Activated CD4-positive, alpha-beta T cell treated with anti-CD3 and anti-CD28 coated beads for 36 hours (primary cell): ENCODE measurements at regions of chr16 and their contacts with region 1.

Region 1: DNA sequence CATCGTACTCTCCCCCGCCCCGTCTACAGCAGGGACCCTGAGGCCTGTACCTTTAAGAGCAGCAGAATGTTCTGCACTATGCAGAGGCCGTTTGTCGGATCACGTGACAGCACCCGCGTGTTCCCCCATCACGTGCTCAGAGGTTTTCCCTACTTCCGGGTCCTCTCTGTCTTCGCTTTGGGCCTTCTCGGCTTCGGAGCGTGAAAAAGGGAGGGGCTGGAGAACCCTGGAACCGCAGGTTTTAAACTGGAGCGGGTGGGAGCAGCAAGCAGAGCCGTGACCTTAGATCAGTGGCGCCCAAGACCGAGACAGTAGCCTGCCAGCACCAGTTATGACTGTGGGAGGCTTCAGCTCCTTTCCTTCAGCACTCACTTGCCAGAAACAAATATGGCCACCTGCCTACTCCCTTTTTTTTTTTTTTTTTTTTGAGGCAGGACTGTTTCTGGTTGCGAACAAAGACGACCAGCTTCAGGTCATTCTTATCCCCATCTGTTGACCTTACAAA is at the start of gene CLN3:
- DNase-seq: peak; percentile 94
- ATAC-seq: peak; percentile 64
- H3K4me3 Mint-ChIP-seq: peak within 1 kb of the TSS; percentile 94
- H3K27ac Mint-ChIP-seq: peak within 1 kb of the TSS; percentile 100
- H3K4me1 Mint-ChIP-seq: peaks cover 60% of the 10 kb centered on the region
- H3K27me3 Mint-ChIP-seq: no peaks in the 10 kb centered on the region
- total RNA-seq, gene CLN3: 19.0 to 24.6 TPM

Region 2: DNA sequence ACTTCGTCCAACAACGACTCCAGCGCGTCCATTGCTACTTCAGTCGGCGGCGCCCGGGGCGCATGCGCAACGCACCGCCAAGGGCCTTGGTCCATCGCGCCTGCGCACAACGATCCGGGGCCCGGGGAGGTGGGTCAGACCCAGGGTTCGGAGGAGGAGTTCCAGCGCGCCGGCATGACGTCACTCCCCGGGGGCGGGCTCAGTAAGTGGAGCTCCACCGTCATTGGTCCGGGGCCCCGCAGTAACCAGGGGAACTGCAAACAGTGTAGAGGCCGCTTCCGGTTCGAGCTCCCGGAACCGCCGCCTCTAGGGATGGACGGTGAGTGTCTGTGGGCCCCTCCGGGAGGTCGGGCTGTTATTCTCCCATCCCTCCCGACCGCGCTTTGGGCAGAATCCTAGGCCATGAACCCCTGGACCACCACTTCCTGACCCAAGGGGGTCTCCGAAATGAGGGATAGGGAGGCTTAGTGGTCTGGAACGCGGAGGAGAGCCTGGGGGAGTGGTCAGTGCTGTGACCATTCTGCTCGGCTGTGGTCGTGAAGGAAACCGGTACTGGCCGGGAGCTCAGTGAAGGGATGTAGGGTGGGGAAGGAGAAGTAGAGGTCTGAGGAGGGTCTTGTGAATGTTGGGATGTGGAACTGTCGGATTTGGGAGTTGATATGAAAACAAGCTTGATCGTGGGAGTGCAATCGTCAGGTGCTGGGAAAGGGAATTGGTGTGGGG is 942.0 kb before region 1 on chr16 and contains the starts of genes GTF3C1 and KATNIP:
- CTCF ChIA-PET with region 1: no interaction called
- POLR2A ChIA-PET with region 1: no interaction called
- intact Hi-C with region 1: loop called in 1 of 2 experiments (anchors 5 kb)
- DNase-seq: peak; percentile 100
- ATAC-seq: peak; percentile 98
- H3K4me3 Mint-ChIP-seq: peak within 1 kb of the TSS; percentile 94
- H3K27ac Mint-ChIP-seq: peak within 1 kb of the TSS; percentile 81
- H3K4me1 Mint-ChIP-seq: peaks cover 35% of the 10 kb centered on the region
- H3K27me3 Mint-ChIP-seq: no peaks in the 10 kb centered on the region
- total RNA-seq, gene GTF3C1: 48.8 to 50.7 TPM
- total RNA-seq, gene KATNIP: 12.3 to 12.8 TPM

Region 3: GRCh38 chr16:28193530-28194423 is 298.2 kb before region 1 on chr16:
- CTCF ChIA-PET with region 1: no interaction called
- POLR2A ChIA-PET with region 1: no interaction called
- intact Hi-C with region 1: loop called in 1 of 2 experiments (anchors 5 kb)
- DNase-seq: peak; percentile 78
- ATAC-seq: peak; percentile 67
- H3K4me3 Mint-ChIP-seq: peak overlapping the region; percentile 66
- H3K27ac Mint-ChIP-seq: peak overlapping the region; percentile 92
- H3K4me1 Mint-ChIP-seq: peaks cover 81% of the 10 kb centered on the region
- H3K27me3 Mint-ChIP-seq: no peaks in the 10 kb centered on the region

Region 4: GRCh38 chr16:28291873-28292660 is 200.0 kb before region 1 on chr16 and contains the start of gene SBK1:
- CTCF ChIA-PET with region 1: interaction called, 3 read pairs
- POLR2A ChIA-PET with region 1: interaction called, 3 read pairs
- intact Hi-C with region 1: loop called in 1 of 2 experiments (anchors 1 kb)
- DNase-seq: peak; percentile 91
- ATAC-seq: peak; percentile 94
- H3K4me3 Mint-ChIP-seq: peak within 1 kb of the TSS; percentile 84
- H3K27ac Mint-ChIP-seq: peak within 1 kb of the TSS; percentile 93
- H3K4me1 Mint-ChIP-seq: peaks cover 51% of the 10 kb centered on the region
- H3K27me3 Mint-ChIP-seq: no peaks in the 10 kb centered on the region
- total RNA-seq, gene SBK1: 6.5 to 6.6 TPM

Region 5: DNA sequence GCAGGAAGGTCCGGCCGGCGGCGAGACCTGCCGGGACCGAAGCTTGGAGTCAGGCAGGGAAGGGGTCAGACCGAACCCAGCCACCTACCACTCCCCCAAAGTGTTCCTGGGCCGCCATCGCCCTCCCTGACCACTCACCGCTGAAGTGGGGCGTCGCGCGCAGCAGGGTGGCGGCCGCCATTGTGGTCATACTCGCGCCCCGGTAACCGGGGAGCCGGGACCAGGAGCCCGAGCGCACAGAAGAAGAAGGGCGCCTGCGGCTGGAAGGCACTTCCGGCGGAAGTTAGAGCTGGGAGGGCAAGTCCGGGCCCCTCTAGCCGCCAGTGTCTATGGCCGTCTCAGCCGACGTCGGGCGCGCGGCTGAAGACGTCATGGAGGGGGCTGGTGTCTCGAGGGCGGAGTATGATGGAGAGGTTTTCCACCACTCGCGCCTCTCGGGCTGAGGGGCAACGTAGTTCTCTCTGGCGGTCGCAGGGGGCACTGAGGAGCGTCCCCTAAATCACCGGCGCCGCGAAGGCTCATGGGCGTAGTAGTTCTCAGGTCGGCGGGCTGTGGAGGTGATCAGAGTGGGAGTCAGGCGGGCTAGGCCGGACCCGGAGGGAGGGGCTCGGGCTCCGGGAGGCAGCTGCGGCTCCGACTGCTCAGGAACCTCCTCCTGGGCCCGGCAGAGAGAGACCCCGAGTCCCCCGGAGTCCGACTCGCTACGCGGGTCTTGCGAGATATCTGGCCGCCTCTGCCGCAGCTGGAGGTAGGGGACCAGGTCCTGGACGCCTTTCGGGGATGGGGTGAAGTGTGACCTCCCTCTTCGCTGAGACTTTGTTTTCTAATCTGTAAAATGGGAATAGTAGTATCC is 354.3 kb after region 1 on chr16 and contains the start of gene TUFM:
- CTCF ChIA-PET with region 1: no interaction called
- POLR2A ChIA-PET with region 1: no interaction called
- intact Hi-C with region 1: loop called in 1 of 2 experiments (anchors 2 kb)
- DNase-seq: peak; percentile 99
- ATAC-seq: peak; percentile 94
- H3K4me3 Mint-ChIP-seq: peak within 1 kb of the TSS; percentile 97
- H3K27ac Mint-ChIP-seq: peak within 1 kb of the TSS; percentile 97
- H3K4me1 Mint-ChIP-seq: peaks cover 23% of the 10 kb centered on the region
- H3K27me3 Mint-ChIP-seq: no peaks in the 10 kb centered on the region
- total RNA-seq, gene TUFM: 224 to 241 TPM

Region 6: GRCh38 chr16:30472328-30472942 is 1980.4 kb after region 1 on chr16 and contains the start of gene ITGAL:
- CTCF ChIA-PET with region 1: no interaction called
- POLR2A ChIA-PET with region 1: no interaction called
- intact Hi-C with region 1: loop called in 1 of 2 experiments (anchors 5 kb)
- DNase-seq: peak; percentile 93
- ATAC-seq: peak; percentile 62
- H3K4me3 Mint-ChIP-seq: peak within 1 kb of the TSS; percentile 95
- H3K27ac Mint-ChIP-seq: peak within 1 kb of the TSS; percentile 99
- H3K4me1 Mint-ChIP-seq: peaks cover 63% of the 10 kb centered on the region
- H3K27me3 Mint-ChIP-seq: no peaks in the 10 kb centered on the region
- total RNA-seq, gene ITGAL: 210 to 222 TPM